GM12878 (cell line): ENCODE measurements at regions of chrX and their contacts with region 1.

Region 1: GRCh38 chrX:44872817-44873414 is at the start of gene KDM6A:
- DNase-seq: peak; percentile 94
- ATAC-seq: peak; percentile 91
- H3K4me3 ChIP-seq: peak within 1 kb of the TSS; percentile 91
- H3K27ac ChIP-seq: peak within 1 kb of the TSS; percentile 90
- H3K4me1 ChIP-seq: no peaks in the 10 kb centered on the region
- H3K27me3 ChIP-seq: no peaks in the 10 kb centered on the region
- CTCF ChIP-seq: no peak
- EP300 ChIP-seq: no peak
- POLR2A ChIP-seq: peak; percentile 86
- RAD21 ChIP-seq: no peak
- polyA plus RNA-seq, gene KDM6A: 7.9 to 8.9 TPM

Region 2: DNA sequence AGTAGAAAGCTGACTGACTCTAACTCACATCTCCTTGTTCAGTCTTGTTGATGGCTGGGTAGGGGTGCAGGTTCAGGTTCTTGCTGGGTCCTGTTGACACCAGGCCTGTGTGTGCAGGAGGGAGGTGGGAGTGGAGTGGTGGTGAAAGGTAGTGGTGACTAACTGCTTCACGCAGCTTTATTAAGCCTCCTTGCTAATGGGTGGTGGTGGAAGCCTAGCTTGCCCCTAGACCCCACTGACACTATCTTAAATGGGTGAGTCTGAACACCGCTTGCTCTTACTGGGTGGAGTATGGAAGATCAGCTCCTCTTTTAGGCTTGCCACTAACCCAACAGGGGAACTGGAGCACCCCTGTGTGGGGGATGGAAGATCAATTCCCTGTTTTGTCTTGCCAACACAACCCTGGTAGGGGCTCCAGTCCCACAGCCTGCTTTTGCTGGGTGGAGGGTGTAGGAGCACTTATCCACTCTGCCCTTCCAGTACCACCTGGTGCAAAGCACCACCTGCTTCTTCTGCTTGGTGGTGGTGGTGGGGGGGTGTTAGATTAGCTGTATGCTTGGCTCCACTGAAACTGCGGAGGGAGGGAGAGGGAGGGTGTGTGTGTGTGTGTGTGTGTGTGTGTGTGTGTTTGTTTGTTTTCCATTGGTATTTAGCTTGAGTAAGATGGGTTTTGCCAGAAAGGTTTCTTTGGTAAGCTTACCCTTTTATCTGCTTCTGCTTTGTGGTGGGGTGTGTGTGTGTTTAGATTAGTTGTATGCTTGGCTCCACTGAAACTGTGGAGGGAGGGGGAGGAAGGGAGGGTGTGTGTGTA is 25.7 kb after region 1 on chrX:
- CTCF ChIA-PET with region 1: interaction called, 12 read pairs
- POLR2A ChIA-PET with region 1: interaction called, 24 read pairs
- RAD21 ChIA-PET with region 1: interaction called, 50 read pairs
- SMC1A ChIA-PET with region 1: interaction called, 50 read pairs
- in situ Hi-C with region 1: no loop called
- intact Hi-C with region 1: no loop called
- DNase-seq: no peak
- ATAC-seq: peak; percentile 74
- H3K4me3 ChIP-seq: no peak overlapping the region; the same call in 1 of the 2 replicates
- H3K27ac ChIP-seq: peak overlapping the region; percentile 70
- H3K4me1 ChIP-seq: peaks cover 16% of the 10 kb centered on the region
- H3K27me3 ChIP-seq: no peaks in the 10 kb centered on the region
- CTCF ChIP-seq: no peak
- EP300 ChIP-seq: no peak
- POLR2A ChIP-seq: no peak
- RAD21 ChIP-seq: no peak

Region 3: GRCh38 chrX:44904542-44905115 is 31.7 kb after region 1 on chrX:
- CTCF ChIA-PET with region 1: interaction called, 12 read pairs
- POLR2A ChIA-PET with region 1: interaction called, 24 read pairs
- RAD21 ChIA-PET with region 1: interaction called, 50 read pairs
- SMC1A ChIA-PET with region 1: interaction called, 50 read pairs
- in situ Hi-C with region 1: no loop called
- intact Hi-C with region 1: loop called (anchors 2 kb)
- DNase-seq: no peak
- ATAC-seq: no peak
- H3K4me3 ChIP-seq: peak overlapping the region; percentile 53
- H3K27ac ChIP-seq: peak overlapping the region; percentile 73
- H3K4me1 ChIP-seq: peaks cover 42% of the 10 kb centered on the region
- H3K27me3 ChIP-seq: no peaks in the 10 kb centered on the region
- CTCF ChIP-seq: peak in 1 of 3 experiments; percentile 16; a peak in 1 of 6 replicates
- EP300 ChIP-seq: no peak
- POLR2A ChIP-seq: no peak
- RAD21 ChIP-seq: no peak

Region 4: GRCh38 chrX:44914532-44915198 is 41.7 kb after region 1 on chrX:
- CTCF ChIA-PET with region 1: no interaction called
- POLR2A ChIA-PET with region 1: interaction called, 5 read pairs
- RAD21 ChIA-PET with region 1: interaction called, 14 read pairs
- SMC1A ChIA-PET with region 1: interaction called, 11 read pairs
- in situ Hi-C with region 1: no loop called
- intact Hi-C with region 1: no loop called
- DNase-seq: no peak
- ATAC-seq: peak; percentile 94
- H3K4me3 ChIP-seq: no peak overlapping the region
- H3K27ac ChIP-seq: peak overlapping the region; percentile 30; the same call in 1 of the 2 replicates
- H3K4me1 ChIP-seq: peaks cover 7% of the 10 kb centered on the region; the same call in 1 of the 2 replicates
- H3K27me3 ChIP-seq: no peaks in the 10 kb centered on the region
- CTCF ChIP-seq: no peak
- EP300 ChIP-seq: no peak
- POLR2A ChIP-seq: no peak
- RAD21 ChIP-seq: no peak

Region 5: DNA sequence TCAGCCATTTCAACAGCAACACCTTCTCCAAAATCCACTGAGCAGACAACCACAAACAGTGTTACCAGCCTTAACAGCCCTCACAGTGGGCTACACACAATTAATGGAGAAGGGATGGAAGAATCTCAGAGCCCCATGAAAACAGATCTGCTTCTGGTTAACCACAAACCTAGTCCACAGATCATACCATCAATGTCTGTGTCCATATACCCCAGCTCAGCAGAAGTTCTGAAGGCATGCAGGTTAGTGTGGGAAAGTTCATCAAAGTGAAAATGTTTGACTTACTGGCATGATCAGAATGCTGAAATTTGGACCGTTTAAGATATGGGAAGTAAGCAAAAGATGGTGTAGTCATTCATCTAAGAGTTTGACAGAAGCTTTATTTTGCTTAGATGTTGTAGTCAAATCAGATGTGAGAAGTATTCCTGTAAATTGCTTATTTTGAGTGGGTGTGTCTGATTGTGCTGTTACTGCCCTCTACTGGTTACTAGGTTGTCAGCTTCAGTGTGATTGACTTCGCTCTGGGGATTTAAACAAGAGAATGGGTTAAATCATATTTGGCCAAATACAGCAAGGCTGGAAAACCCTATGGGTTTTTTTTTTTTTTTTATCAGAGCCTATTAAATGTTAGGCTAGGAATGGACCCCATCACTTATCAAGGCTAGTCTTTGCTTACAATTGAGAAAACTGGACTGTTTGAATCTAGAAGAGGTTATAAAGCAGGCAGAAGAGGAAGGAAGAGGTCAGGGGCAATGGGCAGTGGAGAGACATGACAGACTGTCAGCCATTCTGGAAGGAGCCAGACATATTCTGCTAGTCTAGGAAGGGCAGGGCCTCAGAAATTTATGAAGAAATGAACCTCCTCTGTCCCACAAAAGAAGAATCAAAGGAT is 197.4 kb after region 1 on chrX:
- CTCF ChIA-PET with region 1: interaction called, 31 read pairs
- POLR2A ChIA-PET with region 1: interaction called, 3 read pairs
- RAD21 ChIA-PET with region 1: interaction called, 12 read pairs
- SMC1A ChIA-PET with region 1: interaction called, 30 read pairs
- in situ Hi-C with region 1: loop called (anchors 25 kb)
- intact Hi-C with region 1: loop called (anchors 2 kb)
- DNase-seq: peak; percentile 45
- ATAC-seq: peak; percentile 74
- H3K4me3 ChIP-seq: no peak overlapping the region
- H3K27ac ChIP-seq: 0 out of 2 replicates have a peak overlapping the region, but pooled peaks have one; percentile 6
- H3K4me1 ChIP-seq: peaks cover 9% of the 10 kb centered on the region
- H3K27me3 ChIP-seq: no peaks in the 10 kb centered on the region
- CTCF ChIP-seq: peak; percentile 66 to 74 (median 74)
- EP300 ChIP-seq: no peak
- POLR2A ChIP-seq: no peak
- RAD21 ChIP-seq: peak; percentile 83

Region 6: GRCh38 chrX:45524296-45524695 is 651.4 kb after region 1 on chrX:
- CTCF ChIA-PET with region 1: no interaction called
- POLR2A ChIA-PET with region 1: no interaction called
- RAD21 ChIA-PET with region 1: no interaction called
- SMC1A ChIA-PET with region 1: no interaction called
- in situ Hi-C with region 1: no loop called
- intact Hi-C with region 1: no loop called
- DNase-seq: no peak
- ATAC-seq: no peak
- H3K4me3 ChIP-seq: no peak overlapping the region
- H3K27ac ChIP-seq: no peak overlapping the region
- H3K4me1 ChIP-seq: no peaks in the 10 kb centered on the region
- H3K27me3 ChIP-seq: no peaks in the 10 kb centered on the region
- CTCF ChIP-seq: no peak
- EP300 ChIP-seq: no peak
- POLR2A ChIP-seq: no peak
- RAD21 ChIP-seq: no peak

Region 7: DNA sequence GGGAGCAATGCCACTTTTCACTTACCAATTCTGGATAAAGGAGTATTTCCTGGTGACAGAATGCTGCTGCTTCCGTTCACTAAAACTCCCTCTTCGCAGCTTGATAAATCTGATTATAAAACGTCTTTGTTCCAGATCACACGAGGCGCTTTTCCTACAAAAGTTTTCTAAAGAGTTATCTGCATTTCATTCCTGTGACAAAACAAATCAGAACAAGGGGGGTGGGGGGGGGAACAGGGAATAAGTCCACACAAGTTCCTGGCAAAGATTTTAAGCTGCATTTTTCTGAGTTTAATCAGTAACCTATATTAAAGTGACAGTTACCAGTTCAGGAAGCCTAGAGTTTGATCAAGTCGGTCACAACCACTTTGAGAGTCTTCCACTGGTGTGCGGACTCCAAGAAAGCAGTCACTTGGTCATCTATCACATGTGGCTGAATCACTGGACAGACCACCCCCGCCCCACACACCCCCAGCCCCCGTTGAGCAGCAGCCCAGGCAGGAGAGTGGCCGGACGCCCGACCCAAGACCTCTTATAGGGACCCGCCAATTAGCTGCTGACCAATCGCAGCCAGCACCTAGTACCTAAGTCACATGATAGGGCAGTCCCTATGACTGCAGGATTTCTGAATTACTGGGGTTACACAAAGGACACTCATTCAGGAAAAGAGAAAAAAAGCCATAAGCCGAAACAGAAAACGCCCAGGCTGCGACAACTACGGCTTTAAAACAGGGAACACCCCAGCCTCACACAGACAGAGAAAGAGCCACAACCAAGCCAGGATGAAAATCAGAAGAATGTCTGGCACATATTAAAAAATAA is 897.1 kb after region 1 on chrX:
- CTCF ChIA-PET with region 1: no interaction called
- POLR2A ChIA-PET with region 1: no interaction called
- RAD21 ChIA-PET with region 1: no interaction called
- SMC1A ChIA-PET with region 1: no interaction called
- in situ Hi-C with region 1: loop called (anchors 25 kb)
- intact Hi-C with region 1: no loop called
- DNase-seq: peak; percentile 51
- ATAC-seq: peak; percentile 83
- H3K4me3 ChIP-seq: peak overlapping the region; percentile 65; the same call in 1 of the 2 replicates
- H3K27ac ChIP-seq: no peak overlapping the region; the same call in 1 of the 2 replicates
- H3K4me1 ChIP-seq: peaks cover 4% of the 10 kb centered on the region
- H3K27me3 ChIP-seq: 0 out of 4 replicates have a peak, but pooled peaks cover 0 to 3% of the 10 kb centered on the region in 2 experiments
- CTCF ChIP-seq: no peak
- EP300 ChIP-seq: no peak
- POLR2A ChIP-seq: peak; percentile 65
- RAD21 ChIP-seq: no peak